ENCODE measurements at regions of chr1 and their contacts with region 1.

Region 1: DNA sequence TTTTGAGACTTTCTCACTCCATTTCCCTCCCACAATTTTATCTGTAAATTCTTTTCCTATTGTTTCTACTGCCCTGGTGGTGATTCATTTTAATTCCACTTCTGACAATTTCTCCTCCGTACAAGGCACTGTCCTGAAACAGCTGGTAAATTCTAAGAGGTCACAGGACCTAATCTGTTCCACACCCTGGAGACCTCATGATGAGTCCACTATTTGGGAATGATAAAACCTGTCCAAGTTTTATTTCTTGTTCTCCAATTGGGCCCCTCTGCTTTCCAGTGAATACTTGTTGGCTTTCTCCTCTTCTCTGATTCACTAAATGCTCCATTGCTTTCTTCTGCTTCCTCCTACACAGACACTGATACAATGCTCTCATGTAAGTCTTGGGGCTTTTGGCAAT is 343.1 kb upstream of the DUSP10 start:
- DNase-seq: no peak
- H3K4me3 ChIP-seq: no peak overlapping the region
- H3K27ac ChIP-seq: no peak overlapping the region
- H3K4me1 ChIP-seq: no peaks in the 10 kb centered on the region
- H3K27me3 ChIP-seq: no peaks in the 10 kb centered on the region
- CTCF ChIP-seq: no peak
- POLR2A ChIP-seq: no peak

Region 2: GRCh38 chr1:222654849-222655248 is 569.9 kb after region 1 on chr1:
- intact Hi-C with region 1: loop called (anchors 10 kb)
- DNase-seq: no peak
- H3K4me3 ChIP-seq: no peak overlapping the region
- H3K27ac ChIP-seq: no peak overlapping the region
- H3K4me1 ChIP-seq: no peaks in the 10 kb centered on the region
- H3K27me3 ChIP-seq: no peaks in the 10 kb centered on the region
- CTCF ChIP-seq: no peak
- POLR2A ChIP-seq: no peak